B cell (primary cell): ENCODE measurements at regions of chr2 and their contacts with region 1.

Region 1: DNA sequence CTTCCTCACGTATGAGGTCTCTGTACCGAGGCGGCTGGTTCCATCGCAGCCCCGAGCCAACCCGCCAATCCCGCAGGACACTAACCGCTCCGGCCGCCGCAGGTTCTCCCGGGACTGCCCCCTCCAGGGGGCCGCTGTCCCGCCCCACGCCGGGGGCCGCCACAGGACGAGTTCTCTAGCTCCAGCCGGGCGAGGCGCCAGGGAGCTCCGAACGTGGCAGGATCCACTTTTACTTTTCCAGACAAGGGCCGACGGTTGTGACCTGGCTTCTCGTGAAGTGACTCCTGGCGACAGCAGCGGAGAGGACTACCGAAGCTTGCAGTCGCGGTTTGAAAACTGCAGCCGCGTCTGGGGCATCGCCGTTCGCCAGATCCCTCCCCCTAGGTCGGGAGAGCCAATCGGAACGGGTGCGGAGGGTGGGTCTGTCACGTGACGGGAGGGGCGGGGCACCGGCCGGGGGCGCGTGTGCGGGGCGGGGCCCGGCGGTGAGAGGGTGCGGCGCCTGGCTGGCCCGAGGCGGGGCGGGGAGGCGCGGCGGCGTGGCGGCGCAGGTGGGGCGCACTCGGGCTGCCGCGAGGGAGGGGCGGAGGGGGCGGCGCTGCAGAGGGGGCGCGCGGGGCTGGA is at the start of gene STK17B:
- DNase-seq: peak; percentile 98
- ATAC-seq: peak; percentile 66
- H3K4me3 ChIP-seq: peak within 1 kb of the TSS; percentile 94 to 100 (median 98)
- H3K4me3 Mint-ChIP-seq: peak within 1 kb of the TSS; percentile 100
- H3K27ac ChIP-seq: peak within 1 kb of the TSS; percentile 93 to 99
- H3K27ac Mint-ChIP-seq: peak within 1 kb of the TSS; percentile 99
- H3K4me1 ChIP-seq: peaks cover 50 to 51% of the 10 kb centered on the region in 2 donors
- H3K4me1 Mint-ChIP-seq: peaks cover 56% of the 10 kb centered on the region
- H3K27me3 ChIP-seq: no peaks in the 10 kb centered on the region
- H3K27me3 Mint-ChIP-seq: no peaks in the 10 kb centered on the region
- CTCF ChIP-seq: no peak
- total RNA-seq, gene STK17B: 249 and 261 TPM in 2 replicates

Region 2: GRCh38 chr2:195552581-195552980 is 618.8 kb before region 1 on chr2:
- CTCF ChIA-PET with region 1: no interaction called
- POLR2A ChIA-PET with region 1: no interaction called
- intact Hi-C with region 1: no loop called
- DNase-seq: peak; percentile 28
- ATAC-seq: no peak
- H3K4me3 ChIP-seq: peak overlapping the region in 1 of 5 experiments; percentile 46
- H3K4me3 Mint-ChIP-seq: peak overlapping the region; percentile 77
- H3K27ac ChIP-seq: peak overlapping the region; percentile 36 to 69
- H3K27ac Mint-ChIP-seq: peak overlapping the region; percentile 85
- H3K4me1 ChIP-seq: peaks cover 12 to 19% of the 10 kb centered on the region in 2 donors
- H3K4me1 Mint-ChIP-seq: peaks cover 25% of the 10 kb centered on the region
- H3K27me3 ChIP-seq: no peaks in the 10 kb centered on the region
- H3K27me3 Mint-ChIP-seq: no peaks in the 10 kb centered on the region
- CTCF ChIP-seq: no peak

Region 3: GRCh38 chr2:196068271-196069209 is 102.8 kb before region 1 on chr2 and contains the start of gene DNAH7:
- CTCF ChIA-PET with region 1: interaction called, 3 read pairs
- POLR2A ChIA-PET with region 1: no interaction called
- intact Hi-C with region 1: loop called (anchors 1 kb)
- DNase-seq: peak; percentile 96
- ATAC-seq: peak; percentile 92
- H3K4me3 ChIP-seq: peak within 1 kb of the TSS; percentile 46 to 81 (median 64)
- H3K4me3 Mint-ChIP-seq: peak within 1 kb of the TSS; percentile 96
- H3K27ac ChIP-seq: peak within 1 kb of the TSS; percentile 30 to 73
- H3K27ac Mint-ChIP-seq: peak within 1 kb of the TSS; percentile 93
- H3K4me1 ChIP-seq: peaks cover 12 to 13% of the 10 kb centered on the region in 2 donors
- H3K4me1 Mint-ChIP-seq: peaks cover 15% of the 10 kb centered on the region
- H3K27me3 ChIP-seq: no peaks in the 10 kb centered on the region
- H3K27me3 Mint-ChIP-seq: peaks cover 2% of the 10 kb centered on the region
- CTCF ChIP-seq: peak; percentile 97
- total RNA-seq, gene DNAH7: 0.05 TPM in 1 of 2 replicates, not detected in the other

Region 4: GRCh38 chr2:196149948-196150347 is 21.4 kb before region 1 on chr2:
- CTCF ChIA-PET with region 1: interaction called, 11 read pairs
- POLR2A ChIA-PET with region 1: interaction called, 6 read pairs
- intact Hi-C with region 1: loop called (anchors 1 kb)
- DNase-seq: peak; percentile 83
- ATAC-seq: peak; percentile 80
- H3K4me3 ChIP-seq: peak overlapping the region in 2 of 5 experiments; percentile 11 to 52
- H3K4me3 Mint-ChIP-seq: peak overlapping the region; percentile 86
- H3K27ac ChIP-seq: peak overlapping the region; percentile 71 to 90
- H3K27ac Mint-ChIP-seq: peak overlapping the region; percentile 97
- H3K4me1 ChIP-seq: peaks cover 37 to 55% of the 10 kb centered on the region in 2 donors
- H3K4me1 Mint-ChIP-seq: peaks cover 65% of the 10 kb centered on the region
- H3K27me3 ChIP-seq: no peaks in the 10 kb centered on the region
- H3K27me3 Mint-ChIP-seq: no peaks in the 10 kb centered on the region
- CTCF ChIP-seq: no peak

Region 5: GRCh38 chr2:196195302-196195701 is 23.9 kb after region 1 on chr2:
- CTCF ChIA-PET with region 1: interaction called, 10 read pairs
- POLR2A ChIA-PET with region 1: interaction called, 9 read pairs
- intact Hi-C with region 1: no loop called
- DNase-seq: no peak
- ATAC-seq: no peak
- H3K4me3 ChIP-seq: peak overlapping the region in 1 of 5 experiments; percentile 18
- H3K4me3 Mint-ChIP-seq: peak overlapping the region; percentile 37
- H3K27ac ChIP-seq: no peak overlapping the region
- H3K27ac Mint-ChIP-seq: no peak overlapping the region
- H3K4me1 ChIP-seq: peaks cover 5 to 11% of the 10 kb centered on the region in 2 donors
- H3K4me1 Mint-ChIP-seq: peaks cover 18% of the 10 kb centered on the region
- H3K27me3 ChIP-seq: no peaks in the 10 kb centered on the region
- H3K27me3 Mint-ChIP-seq: no peaks in the 10 kb centered on the region
- CTCF ChIP-seq: no peak

Region 6: DNA sequence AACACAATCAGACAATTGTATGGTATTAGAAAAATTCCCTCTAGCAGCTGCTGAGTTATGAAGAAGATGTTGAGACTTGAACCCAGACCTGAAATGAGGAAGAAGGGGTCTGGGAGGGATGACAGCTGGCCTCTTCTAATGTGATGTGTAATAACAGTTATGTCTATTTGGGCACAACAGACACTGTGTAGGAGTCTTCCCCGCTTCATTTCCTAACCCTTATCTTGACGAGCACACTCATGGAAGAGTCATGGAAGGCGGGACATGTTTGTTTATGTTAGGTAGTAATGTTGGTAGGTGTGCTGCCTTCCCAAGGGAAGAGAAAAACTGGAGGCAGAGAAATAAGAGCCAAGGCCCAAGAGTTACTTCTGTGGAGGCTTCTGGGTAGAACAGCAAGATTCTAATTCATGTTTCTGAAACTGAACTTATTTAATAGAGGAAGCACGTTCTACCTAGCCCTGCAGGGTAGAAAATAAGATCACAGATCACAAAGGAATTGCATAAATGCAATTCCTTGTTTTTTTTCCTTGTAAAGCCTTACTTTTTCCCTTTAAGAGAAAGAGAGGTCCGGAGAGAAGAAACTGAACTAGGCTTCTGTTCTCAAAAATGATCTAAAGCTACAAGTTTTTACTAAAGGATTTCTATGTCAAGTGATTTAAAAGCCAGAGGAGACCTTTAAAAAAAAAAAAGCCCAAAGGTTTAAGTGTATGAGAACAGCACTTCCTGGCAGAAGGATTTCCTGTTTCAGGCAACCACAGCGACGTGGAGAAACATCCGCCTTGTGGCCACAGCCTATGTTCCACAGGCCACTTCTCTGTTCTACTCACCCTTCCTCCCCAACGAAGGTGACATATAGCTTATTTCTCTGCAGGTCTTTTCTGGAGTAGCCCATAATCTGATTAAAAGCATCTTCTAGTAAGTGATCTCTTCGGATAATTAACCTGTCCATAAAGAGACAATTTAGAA is 68.5 kb after region 1 on chr2:
- CTCF ChIA-PET with region 1: interaction called, 26 read pairs
- POLR2A ChIA-PET with region 1: interaction called, 34 read pairs
- intact Hi-C with region 1: loop called (anchors 1 kb)
- DNase-seq: peak; percentile 90
- ATAC-seq: peak; percentile 68
- H3K4me3 ChIP-seq: peak overlapping the region in 2 of 5 experiments; percentile 23 to 36
- H3K4me3 Mint-ChIP-seq: peak overlapping the region; percentile 74
- H3K27ac ChIP-seq: peak overlapping the region; percentile 91 to 92
- H3K27ac Mint-ChIP-seq: peak overlapping the region; percentile 100
- H3K4me1 ChIP-seq: peaks cover 72 to 84% of the 10 kb centered on the region in 2 donors
- H3K4me1 Mint-ChIP-seq: peaks cover 77% of the 10 kb centered on the region
- H3K27me3 ChIP-seq: no peaks in the 10 kb centered on the region
- H3K27me3 Mint-ChIP-seq: no peaks in the 10 kb centered on the region
- CTCF ChIP-seq: peak; percentile 16

Region 7: DNA sequence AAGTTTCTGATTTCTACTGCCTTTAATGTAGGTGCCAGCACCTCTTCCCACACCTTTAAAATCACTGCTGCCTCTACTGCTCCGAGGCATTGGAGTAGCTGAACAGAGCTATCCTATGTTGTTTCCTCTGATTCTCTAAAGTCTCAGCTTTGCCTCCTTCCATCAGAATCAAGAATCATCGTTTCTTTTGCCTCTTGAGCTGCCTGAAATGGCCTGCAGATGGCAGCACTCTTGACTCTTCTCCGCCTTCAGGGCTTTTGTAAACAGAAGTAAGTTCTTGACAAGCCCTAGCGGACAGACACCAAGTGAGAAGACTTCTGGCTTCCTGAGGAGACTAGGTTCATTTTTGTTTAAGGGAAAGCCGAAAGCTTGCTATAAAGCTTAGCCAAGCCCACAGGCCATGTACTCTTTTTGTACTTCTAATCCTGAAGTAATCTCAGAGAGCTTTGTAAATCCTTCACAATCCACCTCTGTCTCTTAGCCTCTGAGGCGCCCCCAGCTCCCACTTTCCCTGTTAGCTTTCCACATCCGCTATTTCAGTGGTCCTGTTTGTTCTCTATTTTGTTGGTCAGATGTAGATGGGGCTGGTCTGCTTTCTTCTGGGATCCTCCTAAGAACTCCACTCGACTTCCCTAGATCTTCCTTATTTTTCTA is 579.7 kb after region 1 on chr2:
- CTCF ChIA-PET with region 1: no interaction called
- POLR2A ChIA-PET with region 1: no interaction called
- intact Hi-C with region 1: no loop called
- DNase-seq: peak; percentile 71
- ATAC-seq: peak; percentile 85
- H3K4me3 ChIP-seq: no peak overlapping the region
- H3K4me3 Mint-ChIP-seq: no peak overlapping the region
- H3K27ac ChIP-seq: no peak overlapping the region
- H3K27ac Mint-ChIP-seq: no peak overlapping the region
- H3K4me1 ChIP-seq: peaks cover 0 to 3% of the 10 kb centered on the region in 2 donors
- H3K4me1 Mint-ChIP-seq: peaks cover 4% of the 10 kb centered on the region
- H3K27me3 ChIP-seq: no peaks in the 10 kb centered on the region
- H3K27me3 Mint-ChIP-seq: no peaks in the 10 kb centered on the region
- CTCF ChIP-seq: peak; percentile 89

Region 8: GRCh38 chr2:197515739-197516392 is 1344.5 kb after region 1 on chr2 and contains the start of gene MOB4:
- CTCF ChIA-PET with region 1: no interaction called
- POLR2A ChIA-PET with region 1: no interaction called
- intact Hi-C with region 1: loop called (anchors 10 kb)
- DNase-seq: peak; percentile 98
- ATAC-seq: peak; percentile 95
- H3K4me3 ChIP-seq: peak within 1 kb of the TSS; percentile 79 to 90 (median 85)
- H3K4me3 Mint-ChIP-seq: peak within 1 kb of the TSS; percentile 97
- H3K27ac ChIP-seq: peak within 1 kb of the TSS; percentile 92 to 96
- H3K27ac Mint-ChIP-seq: peak within 1 kb of the TSS; percentile 91
- H3K4me1 ChIP-seq: peaks cover 10 to 17% of the 10 kb centered on the region in 2 donors
- H3K4me1 Mint-ChIP-seq: peaks cover 41% of the 10 kb centered on the region
- H3K27me3 ChIP-seq: no peaks in the 10 kb centered on the region
- H3K27me3 Mint-ChIP-seq: no peaks in the 10 kb centered on the region
- CTCF ChIP-seq: no peak
- total RNA-seq, gene MOB4: 20.1 and 20.8 TPM in 2 replicates